CD4-positive, alpha-beta T cell (primary cell): ENCODE measurements at regions of chr2 and their contacts with region 1.

Region 1: DNA sequence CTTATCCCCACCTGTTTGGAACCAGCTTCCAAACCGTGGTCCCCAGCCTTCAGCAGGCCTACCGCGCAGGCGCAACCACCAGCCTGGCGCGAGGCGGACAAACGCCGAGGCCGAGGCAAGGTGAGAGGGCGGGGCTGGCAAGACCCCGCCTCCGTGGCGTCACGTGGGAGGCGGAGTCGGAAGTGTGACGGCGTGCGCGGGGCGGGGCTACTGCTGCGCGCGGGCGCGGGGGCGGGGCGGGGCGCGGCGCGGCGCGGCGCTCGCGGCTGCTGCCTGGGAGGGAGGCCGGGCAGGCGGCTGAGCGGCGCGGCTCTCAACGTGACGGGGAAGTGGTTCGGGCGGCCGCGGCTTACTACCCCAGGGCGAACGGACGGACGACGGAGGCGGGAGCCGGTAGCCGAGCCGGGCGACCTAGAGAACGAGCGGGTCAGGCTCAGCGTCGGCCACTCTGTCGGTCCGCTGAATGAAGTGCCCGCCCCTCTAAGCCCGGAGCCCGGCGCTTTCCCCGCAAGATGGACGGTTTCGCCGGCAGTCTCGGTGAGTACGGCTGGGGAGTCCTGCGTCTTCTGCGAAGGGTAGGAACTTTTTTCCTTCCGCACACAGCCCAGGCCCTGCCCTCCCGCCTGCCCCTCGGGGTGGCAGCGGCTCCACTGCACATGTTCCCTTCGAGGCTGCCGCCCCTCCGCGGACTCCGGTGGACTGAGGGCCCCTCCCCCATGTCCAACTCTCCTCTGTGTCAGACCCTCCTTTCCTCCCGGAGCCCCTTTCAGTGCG is at the start of gene EML4:
- DNase-seq: peak; percentile 79 to 95 (median 89)
- ATAC-seq: peak; percentile 87
- H3K4me3 ChIP-seq: peak within 1 kb of the TSS; percentile 96
- H3K4me3 Mint-ChIP-seq: no peak within 1 kb of the TSS
- H3K27ac ChIP-seq: peak within 1 kb of the TSS; percentile 88 to 93
- H3K27ac Mint-ChIP-seq: no peak within 1 kb of the TSS
- H3K4me1 ChIP-seq: peaks cover 17% of the 10 kb centered on the region
- H3K4me1 Mint-ChIP-seq: peaks cover 9% of the 10 kb centered on the region
- H3K27me3 ChIP-seq: no peaks in the 10 kb centered on the region
- H3K27me3 Mint-ChIP-seq: no peaks in the 10 kb centered on the region
- CTCF ChIP-seq: no peak
- total RNA-seq, gene EML4: 219 to 228 TPM

Region 2: GRCh38 chr2:42095923-42096408 is 73.3 kb before region 1 on chr2:
- CTCF ChIA-PET with region 1: interaction called, 8 read pairs
- POLR2A ChIA-PET with region 1: interaction called, 230 read pairs
- intact Hi-C with region 1: loop called in 1 of 2 experiments (anchors 2 kb)
- DNase-seq: peak; percentile 67 to 90 (median 74)
- ATAC-seq: peak; percentile 69
- H3K4me3 ChIP-seq: no peak overlapping the region
- H3K4me3 Mint-ChIP-seq: peak overlapping the region; percentile 23
- H3K27ac ChIP-seq: no peak overlapping the region
- H3K27ac Mint-ChIP-seq: peak overlapping the region; percentile 41
- H3K4me1 ChIP-seq: peaks cover 51% of the 10 kb centered on the region
- H3K4me1 Mint-ChIP-seq: peaks cover 50% of the 10 kb centered on the region
- H3K27me3 ChIP-seq: no peaks in the 10 kb centered on the region
- H3K27me3 Mint-ChIP-seq: no peaks in the 10 kb centered on the region
- CTCF ChIP-seq: peak; percentile 86

Region 3: GRCh38 chr2:42132966-42133641 is 36.2 kb before region 1 on chr2:
- CTCF ChIA-PET with region 1: interaction called, 3 read pairs
- POLR2A ChIA-PET with region 1: interaction called, 41 read pairs
- intact Hi-C with region 1: loop called (anchors 1 to 5 kb)
- DNase-seq: peak; percentile 81 to 98 (median 88)
- ATAC-seq: peak; percentile 87
- H3K4me3 ChIP-seq: peak overlapping the region; percentile 29
- H3K4me3 Mint-ChIP-seq: peak overlapping the region; percentile 63
- H3K27ac ChIP-seq: peak overlapping the region; percentile 78 to 95
- H3K27ac Mint-ChIP-seq: peak overlapping the region; percentile 87
- H3K4me1 ChIP-seq: peaks cover 100% of the 10 kb centered on the region
- H3K4me1 Mint-ChIP-seq: peaks cover 88% of the 10 kb centered on the region
- H3K27me3 ChIP-seq: no peaks in the 10 kb centered on the region
- H3K27me3 Mint-ChIP-seq: no peaks in the 10 kb centered on the region
- CTCF ChIP-seq: no peak

Region 4: DNA sequence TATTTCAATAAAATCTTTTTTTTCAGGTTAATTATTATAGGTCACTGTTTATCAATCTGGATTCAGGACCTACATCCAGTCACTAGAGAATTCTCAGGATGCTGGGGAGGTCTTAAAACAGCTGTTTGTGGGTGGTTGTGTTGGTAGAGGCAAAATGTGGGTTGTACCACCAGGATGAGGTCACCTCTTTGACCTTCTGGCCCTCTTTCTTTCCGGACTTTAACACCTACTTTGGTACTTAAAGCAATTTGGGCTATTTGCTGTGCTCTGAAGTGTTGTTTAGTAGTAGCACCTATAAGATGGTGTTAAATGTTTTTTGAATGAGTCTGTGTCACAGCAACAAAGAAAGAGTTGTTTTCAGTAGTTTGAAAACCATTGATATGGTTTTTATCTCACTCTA is 14.5 kb after region 1 on chr2:
- CTCF ChIA-PET with region 1: interaction called, 4 read pairs
- POLR2A ChIA-PET with region 1: interaction called, 16 read pairs
- intact Hi-C with region 1: loop called (anchors 1 to 2 kb)
- DNase-seq: peak in 2 of 14 experiments; percentile 24 to 42
- ATAC-seq: no peak
- H3K4me3 ChIP-seq: no peak overlapping the region
- H3K4me3 Mint-ChIP-seq: no peak overlapping the region
- H3K27ac ChIP-seq: no peak overlapping the region
- H3K27ac Mint-ChIP-seq: peak overlapping the region; percentile 46
- H3K4me1 ChIP-seq: peaks cover 42% of the 10 kb centered on the region
- H3K4me1 Mint-ChIP-seq: peaks cover 87% of the 10 kb centered on the region
- H3K27me3 ChIP-seq: no peaks in the 10 kb centered on the region
- H3K27me3 Mint-ChIP-seq: no peaks in the 10 kb centered on the region
- CTCF ChIP-seq: no peak

Region 5: DNA sequence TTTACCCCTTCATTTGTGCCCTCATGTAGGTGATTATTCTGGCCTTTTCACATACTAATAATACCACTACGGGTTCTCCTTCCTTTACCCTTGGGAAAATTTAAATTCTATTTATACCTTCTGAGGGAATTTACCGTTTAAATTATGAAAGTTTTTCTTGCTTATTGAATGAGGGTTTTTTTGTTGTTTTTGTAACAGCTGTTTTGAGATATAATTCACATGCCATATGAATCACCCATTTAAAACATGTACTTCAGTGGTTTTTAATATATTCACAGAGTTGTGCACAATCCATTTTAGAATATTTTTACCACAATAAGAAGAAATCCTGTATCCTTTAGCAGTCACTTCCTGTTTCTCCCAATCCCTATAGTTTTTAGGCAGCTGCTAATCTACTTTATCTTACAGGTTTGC is 54.6 kb after region 1 on chr2:
- CTCF ChIA-PET with region 1: no interaction called
- POLR2A ChIA-PET with region 1: no interaction called
- intact Hi-C with region 1: loop called in 1 of 2 experiments (anchors 10 kb)
- DNase-seq: no peak
- ATAC-seq: no peak
- H3K4me3 ChIP-seq: no peak overlapping the region
- H3K4me3 Mint-ChIP-seq: no peak overlapping the region
- H3K27ac ChIP-seq: no peak overlapping the region
- H3K27ac Mint-ChIP-seq: no peak overlapping the region
- H3K4me1 ChIP-seq: peaks cover 31% of the 10 kb centered on the region
- H3K4me1 Mint-ChIP-seq: peaks cover 94% of the 10 kb centered on the region
- H3K27me3 ChIP-seq: no peaks in the 10 kb centered on the region
- H3K27me3 Mint-ChIP-seq: no peaks in the 10 kb centered on the region
- CTCF ChIP-seq: no peak